ENCODE measurements at regions of chr10 and their contacts with region 1.

Region 1: GRCh38 chr10:50312464-50313437 is 61.4 kb upstream of the ASAH2 start:
- DNase-seq: no peak
- H3K4me3 ChIP-seq: no peak overlapping the region
- CTCF ChIP-seq: no peak
- POLR2A ChIP-seq: no peak

Region 2: GRCh38 chr10:48900371-48900801 is 1412.4 kb before region 1 on chr10:
- intact Hi-C with region 1: no loop called
- DNase-seq: peak in 1 of 2 donors; percentile 24
- H3K4me3 ChIP-seq: no peak overlapping the region
- CTCF ChIP-seq: no peak
- POLR2A ChIP-seq: no peak

Region 3: DNA sequence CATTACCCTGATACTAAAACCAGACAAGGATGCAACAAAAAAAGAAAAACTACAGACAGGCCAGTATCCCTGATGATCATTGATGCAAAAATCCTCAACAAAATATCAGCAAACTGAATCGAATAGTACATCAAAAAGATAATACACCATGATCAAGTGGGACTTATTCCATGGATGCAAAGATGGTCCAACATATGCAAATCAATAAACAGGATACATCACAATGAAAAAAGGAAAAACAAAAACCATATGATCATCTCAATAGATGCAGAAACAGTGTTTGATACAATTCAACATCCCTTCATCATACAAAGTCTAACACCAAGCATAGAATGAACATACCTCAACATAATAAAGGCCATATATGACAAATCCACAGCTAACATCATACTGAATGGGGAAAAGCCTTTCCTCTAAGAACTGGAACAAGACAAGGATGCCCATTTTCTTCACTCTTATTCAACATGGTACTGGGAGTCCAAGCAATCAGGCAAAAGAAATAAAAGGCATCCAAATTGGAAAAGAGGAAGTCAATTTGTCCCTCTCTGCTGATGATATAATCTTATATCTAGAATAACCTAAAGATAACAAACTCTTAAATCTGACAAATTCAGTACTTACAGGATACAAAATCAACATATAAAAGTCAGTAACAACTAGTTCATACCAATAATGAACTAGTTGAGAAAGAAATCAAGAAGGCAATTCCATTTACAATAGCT is 12.6 kb before region 1 on chr10:
- intact Hi-C with region 1: loop called (anchors 2 kb)
- DNase-seq: no peak
- H3K4me3 ChIP-seq: no peak overlapping the region
- CTCF ChIP-seq: no peak
- POLR2A ChIP-seq: no peak

Region 4: DNA sequence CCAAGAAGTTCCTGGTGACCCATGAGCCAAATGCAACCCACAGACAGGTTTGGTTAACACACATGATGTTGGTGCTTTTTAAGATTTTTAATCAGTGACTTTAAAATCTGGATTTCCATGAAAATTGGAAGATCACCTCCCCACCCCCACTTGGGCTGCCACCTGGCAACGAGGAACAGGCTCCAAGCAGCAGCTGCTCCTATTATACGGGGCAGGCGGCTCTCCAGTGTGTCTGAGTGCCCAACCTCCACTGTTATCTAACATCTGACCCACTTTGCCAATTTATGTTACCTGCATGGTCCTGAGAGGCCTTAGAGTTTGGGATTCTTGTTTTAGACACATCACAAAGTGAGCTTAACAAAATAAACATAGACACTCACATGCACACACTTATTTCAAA is 254.6 kb after region 1 on chr10:
- intact Hi-C with region 1: no loop called
- DNase-seq: no peak
- H3K4me3 ChIP-seq: no peak overlapping the region
- CTCF ChIP-seq: no peak
- POLR2A ChIP-seq: no peak

Measured in lower leg skin (tissue), 4 donors.